ENCODE measurements at regions of chr21 and their contacts with region 1.

Region 1: DNA sequence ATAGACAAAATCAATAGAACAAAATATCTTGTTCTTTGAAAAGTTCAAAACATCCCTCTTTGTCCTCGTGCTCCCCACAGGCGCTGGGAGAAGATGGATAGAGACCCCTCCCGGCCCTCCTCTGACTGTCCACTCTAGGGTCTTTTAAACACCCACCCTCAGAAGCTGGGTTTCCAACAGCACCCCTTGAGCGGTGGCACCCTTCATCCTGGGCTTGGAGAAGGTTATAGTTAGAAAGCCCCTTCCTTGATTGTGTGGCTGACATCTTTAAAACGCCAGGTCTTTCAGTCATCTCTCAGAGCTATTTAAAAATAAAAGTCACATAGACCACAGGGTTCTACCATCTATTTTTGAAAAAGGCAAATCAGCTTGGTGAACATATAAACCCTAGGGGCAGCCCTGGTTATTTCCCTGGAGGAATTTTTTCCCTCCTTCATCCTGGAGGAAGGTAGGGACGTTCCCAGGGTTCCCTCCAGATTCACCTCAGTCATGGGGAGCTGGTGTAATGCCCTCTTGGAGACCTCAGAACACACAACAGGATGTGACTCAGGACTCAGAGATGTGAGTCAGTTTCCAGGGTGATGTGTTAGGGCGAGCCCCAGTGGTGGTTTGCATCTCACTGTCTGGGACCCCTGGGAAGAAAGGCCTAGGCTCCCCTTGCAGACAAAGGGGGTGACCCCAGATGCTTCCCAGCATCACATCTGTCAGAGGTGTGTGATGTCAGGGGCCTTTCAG is 138.5 kb downstream of the CLIC6 start:
- DNase-seq: peak in 2 of 9 donors; percentile 32 to 64
- ATAC-seq: peak; percentile 88
- H3K4me3 ChIP-seq: no peak overlapping the region
- H3K4me3 Mint-ChIP-seq: peak overlapping the region in 3 of 10 donors; percentile 18 to 52 (median 33)
- H3K27ac ChIP-seq: peak overlapping the region; percentile 36
- H3K27ac Mint-ChIP-seq: peak overlapping the region; percentile 28 to 91 (median 81)
- H3K4me1 ChIP-seq: peaks cover 25 to 49% of the 10 kb centered on the region in 2 donors
- H3K4me1 Mint-ChIP-seq: peaks cover 38 to 89% (median 82%) of the 10 kb centered on the region in 7 donors
- H3K27me3 ChIP-seq: no peaks in the 10 kb centered on the region
- H3K27me3 Mint-ChIP-seq: no peaks in the 10 kb centered on the region

Region 2: GRCh38 chr21:34845521-34846451 is 38.5 kb after region 1 on chr21:
- CTCF ChIA-PET with region 1: no interaction called
- POLR2A ChIA-PET with region 1: no interaction called
- intact Hi-C with region 1: loop called in 1 of 2 experiments (anchors 5 kb)
- DNase-seq: peak in 1 of 9 donors; percentile 44
- ATAC-seq: peak; percentile 63
- H3K4me3 ChIP-seq: no peak overlapping the region
- H3K4me3 Mint-ChIP-seq: peak overlapping the region in 2 of 10 donors; percentile 50 to 72
- H3K27ac ChIP-seq: no peak overlapping the region
- H3K27ac Mint-ChIP-seq: peak overlapping the region; percentile 50 to 83 (median 70)
- H3K4me1 ChIP-seq: peaks cover 0 to 20% of the 10 kb centered on the region in 2 donors
- H3K4me1 Mint-ChIP-seq: peaks cover 23 to 40% (median 34%) of the 10 kb centered on the region in 7 donors
- H3K27me3 ChIP-seq: no peaks in the 10 kb centered on the region
- H3K27me3 Mint-ChIP-seq: no peaks in the 10 kb centered on the region

Region 3: GRCh38 chr21:34865928-34866284 is 58.6 kb after region 1 on chr21:
- CTCF ChIA-PET with region 1: no interaction called
- POLR2A ChIA-PET with region 1: no interaction called
- intact Hi-C with region 1: no loop called
- DNase-seq: no peak
- ATAC-seq: peak; percentile 60
- H3K4me3 ChIP-seq: no peak overlapping the region
- H3K4me3 Mint-ChIP-seq: peak overlapping the region in 1 of 10 donors; percentile 75
- H3K27ac ChIP-seq: no peak overlapping the region
- H3K27ac Mint-ChIP-seq: peak overlapping the region in 7 of 9 donors; percentile 40 to 79 (median 52)
- H3K4me1 ChIP-seq: peaks cover 0 to 16% of the 10 kb centered on the region in 2 donors
- H3K4me1 Mint-ChIP-seq: peaks cover 23 to 61% (median 47%) of the 10 kb centered on the region in 7 donors
- H3K27me3 ChIP-seq: no peaks in the 10 kb centered on the region
- H3K27me3 Mint-ChIP-seq: no peaks in the 10 kb centered on the region

Measured in naive thymus-derived CD4-positive, alpha-beta T cell (primary cell).